ENCODE measurements at regions of chr16 and their contacts with region 1.

Region 1: DNA sequence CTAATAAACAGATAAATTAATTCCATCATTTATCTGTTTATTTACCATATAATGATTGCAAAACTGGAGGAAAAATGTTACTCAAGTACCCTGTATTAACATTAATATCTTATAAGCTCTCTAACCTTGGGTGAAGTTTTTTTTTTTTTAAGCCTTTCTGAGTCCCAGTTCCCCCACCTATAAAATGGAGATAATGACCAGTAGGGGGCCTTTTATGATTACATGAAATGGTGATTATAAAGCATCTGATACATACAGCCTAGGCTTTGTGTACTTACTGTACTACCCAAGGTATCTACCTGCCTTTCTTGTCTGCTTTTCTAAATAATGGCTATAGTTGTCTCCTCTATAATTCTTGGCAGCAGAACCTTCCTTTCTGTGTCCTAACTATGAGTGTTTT is 22.6 kb downstream of the LRRC36 start:
- DNase-seq: no peak
- H3K4me3 Mint-ChIP-seq: no peak overlapping the region
- H3K27ac Mint-ChIP-seq: no peak overlapping the region
- H3K4me1 Mint-ChIP-seq: peaks cover 25% of the 10 kb centered on the region
- H3K27me3 Mint-ChIP-seq: no peaks in the 10 kb centered on the region
- CTCF ChIP-seq: peak; percentile 52

Region 2: GRCh38 chr16:67372664-67373063 is 23.5 kb after region 1 on chr16:
- CTCF ChIA-PET with region 1: no interaction called
- intact Hi-C with region 1: no loop called
- DNase-seq: no peak
- H3K4me3 Mint-ChIP-seq: no peak overlapping the region
- H3K27ac Mint-ChIP-seq: no peak overlapping the region
- H3K4me1 Mint-ChIP-seq: peaks cover 16% of the 10 kb centered on the region
- H3K27me3 Mint-ChIP-seq: no peaks in the 10 kb centered on the region
- CTCF ChIP-seq: peak; percentile 68

Region 3: GRCh38 chr16:67393035-67393787 is 44.0 kb after region 1 on chr16 and contains the start of gene TPPP3:
- CTCF ChIA-PET with region 1: interaction called, 4 read pairs
- intact Hi-C with region 1: loop called (anchors 1 kb)
- DNase-seq: peak; percentile 94
- H3K4me3 Mint-ChIP-seq: peak within 1 kb of the TSS; percentile 74
- H3K27ac Mint-ChIP-seq: peak within 1 kb of the TSS; percentile 37
- H3K4me1 Mint-ChIP-seq: peaks cover 45% of the 10 kb centered on the region
- H3K27me3 Mint-ChIP-seq: no peaks in the 10 kb centered on the region
- CTCF ChIP-seq: peak; percentile 69
- total RNA-seq, gene TPPP3: 8.5 and 8.8 TPM in 2 replicates

Region 4: DNA sequence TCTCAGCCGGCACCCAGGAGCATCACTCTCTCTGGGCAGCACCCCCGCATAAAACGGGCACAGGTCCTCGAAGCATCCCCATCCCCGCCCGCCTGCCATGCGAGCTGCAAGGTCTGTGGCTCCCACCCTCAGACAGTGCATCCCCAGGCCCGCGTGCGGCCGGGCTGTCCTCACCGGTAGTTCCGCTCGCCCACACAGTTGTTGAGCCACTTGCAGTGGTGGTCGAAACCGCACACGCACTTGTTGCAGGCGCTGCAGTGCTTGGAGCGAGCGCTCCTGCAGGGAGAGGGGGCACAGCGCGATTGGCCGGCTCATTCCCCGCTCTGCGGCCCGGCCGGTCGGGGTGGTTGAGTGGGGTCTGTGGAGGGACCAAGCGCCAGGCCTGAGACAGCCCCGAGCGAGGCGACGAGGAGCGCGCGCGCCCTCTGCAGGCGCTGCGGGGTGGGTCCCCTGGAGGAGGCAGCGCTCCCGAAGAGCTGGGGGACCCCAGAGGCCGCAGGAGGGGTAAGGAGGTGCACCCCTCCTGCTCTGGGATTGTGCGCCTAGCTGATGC is 50.1 kb after region 1 on chr16:
- CTCF ChIA-PET with region 1: interaction called, 5 read pairs
- intact Hi-C with region 1: loop called (anchors 1 kb)
- DNase-seq: peak; percentile 83
- H3K4me3 Mint-ChIP-seq: no peak overlapping the region
- H3K27ac Mint-ChIP-seq: no peak overlapping the region
- H3K4me1 Mint-ChIP-seq: peaks cover 35% of the 10 kb centered on the region
- H3K27me3 Mint-ChIP-seq: no peaks in the 10 kb centered on the region
- CTCF ChIP-seq: peak; percentile 94

Region 5: GRCh38 chr16:67415872-67416793 is 67.0 kb after region 1 on chr16 and contains the start of gene ZDHHC1:
- CTCF ChIA-PET with region 1: interaction called, 3 read pairs
- intact Hi-C with region 1: loop called (anchors 5 kb)
- DNase-seq: peak; percentile 92
- H3K4me3 Mint-ChIP-seq: peak within 1 kb of the TSS; percentile 75
- H3K27ac Mint-ChIP-seq: peak within 1 kb of the TSS; percentile 66
- H3K4me1 Mint-ChIP-seq: peaks cover 42% of the 10 kb centered on the region
- H3K27me3 Mint-ChIP-seq: peaks cover 15% of the 10 kb centered on the region
- CTCF ChIP-seq: peak; percentile 80
- total RNA-seq, gene ZDHHC1: 22.6 and 24.4 TPM in 2 replicates